ENCODE measurements at regions of chr2 and their contacts with region 1.

Region 1: GRCh38 chr2:85561317-85561979 is at the start of gene GGCX:
- DNase-seq: peak; percentile 89 to 97
- ATAC-seq: peak; percentile 96 to 98
- H3K4me3 ChIP-seq: peak within 1 kb of the TSS; percentile 91
- H3K27ac ChIP-seq: peak within 1 kb of the TSS; percentile 90
- H3K4me1 ChIP-seq: peaks cover 13% of the 10 kb centered on the region
- CTCF ChIP-seq: no peak
- EP300 ChIP-seq: no peak
- POLR2A ChIP-seq: peak; percentile 88
- RAD21 ChIP-seq: no peak; a peak in 2 of 5 replicates
- polyA plus RNA-seq, gene GGCX: 39.0 and 49.6 TPM in 2 replicates

Region 2: GRCh38 chr2:85602476-85603234 is 41.2 kb after region 1 on chr2 and contains the start of gene TMEM150A:
- CTCF ChIA-PET with region 1: interaction called, 12 read pairs
- POLR2A ChIA-PET with region 1: interaction called, 3 read pairs
- DNase-seq: peak; percentile 83 to 88
- ATAC-seq: peak; percentile 87 to 94
- H3K4me3 ChIP-seq: peak within 1 kb of the TSS; percentile 66
- H3K27ac ChIP-seq: peak within 1 kb of the TSS; percentile 88 to 92
- H3K4me1 ChIP-seq: peaks cover 20% of the 10 kb centered on the region
- CTCF ChIP-seq: peak; percentile 17; the same call in 1 of the 3 replicates
- EP300 ChIP-seq: no peak
- POLR2A ChIP-seq: peak; percentile 63
- RAD21 ChIP-seq: 0 out of 5 replicates have a peak, but pooled peaks have one; percentile 10 to 13
- polyA plus RNA-seq, gene TMEM150A: 8.5 and 14.0 TPM in 2 replicates